Right ventricle myocardium inferior (tissue), 1 donor: ENCODE measurements at regions of chr11 and their contacts with region 1.

Region 1: GRCh38 chr11:69417146-69418085 is 64.0 kb upstream of the LINC01488 start:
- DNase-seq: no peak
- ATAC-seq: no peak

Region 2: DNA sequence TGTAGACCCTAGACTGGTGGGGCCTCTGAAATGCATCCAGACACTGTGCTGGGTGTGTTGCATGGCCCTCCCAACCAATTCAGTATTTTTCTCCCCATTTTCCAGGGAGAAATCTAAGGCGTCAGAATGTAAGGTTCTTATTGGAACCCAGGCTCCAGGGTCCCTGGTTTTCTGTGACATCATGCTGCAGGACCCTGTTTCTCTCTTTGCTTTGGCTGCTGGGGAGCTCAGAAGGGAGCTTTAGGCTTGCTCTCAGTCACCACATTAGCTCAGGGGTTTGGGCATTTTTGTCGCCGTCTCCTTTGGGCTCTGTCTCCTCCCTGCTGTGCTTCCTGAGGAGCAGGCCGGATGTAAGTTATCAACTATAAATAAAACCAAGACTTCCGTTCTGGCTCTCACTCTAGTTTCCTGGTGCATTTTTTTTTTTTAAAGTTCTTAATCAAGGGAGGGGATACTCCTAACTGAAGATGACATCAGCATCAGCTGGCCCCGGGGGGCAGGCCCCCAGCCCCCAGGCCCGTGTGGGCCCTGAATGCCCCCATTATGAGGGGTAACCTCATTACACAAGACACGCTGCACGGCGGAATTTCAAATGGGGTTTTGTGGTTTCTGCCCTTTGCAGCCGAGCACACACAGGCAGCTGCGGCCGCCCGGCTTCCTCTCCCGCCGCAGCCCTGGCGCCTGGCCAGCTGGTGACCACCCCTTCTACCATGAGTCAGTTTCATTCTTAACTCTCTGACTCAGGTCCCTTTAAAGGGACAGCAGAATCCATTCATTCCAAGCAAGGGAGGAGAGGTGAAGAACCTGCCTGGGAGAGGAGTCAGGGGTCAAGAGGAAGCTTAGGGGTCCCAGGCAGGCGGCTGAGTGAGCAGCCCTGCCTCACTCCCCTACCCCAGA is 120.3 kb before region 1 on chr11:
- intact Hi-C with region 1: loop called (anchors 10 kb)
- DNase-seq: peak; percentile 97
- ATAC-seq: peak; percentile 76